B cell (primary cell): ENCODE measurements at regions of chr11 and their contacts with region 1.

Region 1: DNA sequence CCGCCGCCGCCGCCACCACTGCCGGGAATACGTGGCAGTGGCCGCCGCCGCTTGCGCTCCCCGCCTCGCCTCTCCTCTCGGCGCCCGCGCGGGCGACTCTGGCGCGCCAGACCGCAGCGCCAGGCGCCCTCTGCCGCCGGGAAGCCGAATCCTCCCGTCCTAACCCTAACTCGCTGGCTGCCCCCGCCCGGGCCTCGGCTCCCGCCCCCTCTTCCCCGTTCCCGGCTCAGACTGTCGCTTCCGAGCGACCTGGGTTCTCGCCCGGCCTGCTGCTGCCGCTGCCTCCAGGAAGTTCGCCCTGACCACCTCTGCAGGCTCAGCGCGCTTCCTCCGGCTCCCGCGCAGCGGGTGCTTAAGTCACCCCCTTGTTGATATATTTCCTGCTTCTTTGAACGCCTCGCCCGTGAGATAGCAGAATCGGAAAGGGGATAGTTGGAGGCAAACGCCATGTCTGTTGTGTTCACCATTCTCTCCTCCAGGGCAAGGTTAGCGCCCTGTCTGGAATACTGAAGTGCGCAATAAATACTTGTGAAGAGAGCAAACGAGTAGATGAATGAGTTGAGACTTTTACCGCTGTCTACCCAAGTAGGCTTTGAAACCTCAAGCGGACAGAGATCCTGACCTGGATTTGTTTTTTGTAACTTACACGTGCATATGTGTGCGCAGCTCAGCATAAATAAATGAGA is at the start of gene SMCO4:
- DNase-seq: peak; percentile 80
- ATAC-seq: peak; percentile 85
- H3K4me3 ChIP-seq: peak within 1 kb of the TSS; percentile 21 to 87 (median 62)
- H3K4me3 Mint-ChIP-seq: peak within 1 kb of the TSS; percentile 90
- H3K27ac ChIP-seq: peak within 1 kb of the TSS in 1 of 2 donors; percentile 15
- H3K27ac Mint-ChIP-seq: peak within 1 kb of the TSS; percentile 83
- H3K4me1 ChIP-seq: peaks cover 8 to 14% of the 10 kb centered on the region in 2 donors
- H3K4me1 Mint-ChIP-seq: peaks cover 17% of the 10 kb centered on the region
- H3K27me3 ChIP-seq: peaks cover 0 to 7% (median 0%) of the 10 kb centered on the region in 4 experiments
- H3K27me3 Mint-ChIP-seq: peaks cover 19% of the 10 kb centered on the region
- CTCF ChIP-seq: peak; percentile 65
- total RNA-seq, gene SMCO4: 2.0 and 3.6 TPM in 2 replicates

Region 2: GRCh38 chr11:93234602-93235207 is 308.7 kb before region 1 on chr11:
- CTCF ChIA-PET with region 1: interaction called, 23 read pairs
- POLR2A ChIA-PET with region 1: no interaction called
- intact Hi-C with region 1: loop called (anchors 1 kb)
- DNase-seq: peak; percentile 69
- ATAC-seq: peak; percentile 92
- H3K4me3 ChIP-seq: no peak overlapping the region
- H3K4me3 Mint-ChIP-seq: no peak overlapping the region
- H3K27ac ChIP-seq: no peak overlapping the region
- H3K27ac Mint-ChIP-seq: no peak overlapping the region
- H3K4me1 ChIP-seq: no peaks in the 10 kb centered on the region
- H3K4me1 Mint-ChIP-seq: no peaks in the 10 kb centered on the region
- H3K27me3 ChIP-seq: peaks cover 0 to 5% (median 2%) of the 10 kb centered on the region in 4 experiments
- H3K27me3 Mint-ChIP-seq: peaks cover 27% of the 10 kb centered on the region
- CTCF ChIP-seq: peak; percentile 87

Region 3: GRCh38 chr11:93432247-93432646 is 111.2 kb before region 1 on chr11:
- CTCF ChIA-PET with region 1: no interaction called
- POLR2A ChIA-PET with region 1: no interaction called
- intact Hi-C with region 1: no loop called
- DNase-seq: no peak
- ATAC-seq: no peak
- H3K4me3 ChIP-seq: no peak overlapping the region
- H3K4me3 Mint-ChIP-seq: no peak overlapping the region
- H3K27ac ChIP-seq: no peak overlapping the region
- H3K27ac Mint-ChIP-seq: no peak overlapping the region
- H3K4me1 ChIP-seq: no peaks in the 10 kb centered on the region
- H3K4me1 Mint-ChIP-seq: no peaks in the 10 kb centered on the region
- H3K27me3 ChIP-seq: no peaks in the 10 kb centered on the region
- H3K27me3 Mint-ChIP-seq: no peaks in the 10 kb centered on the region
- CTCF ChIP-seq: no peak